A673 (cell line): ENCODE measurements at regions of chr7 and their contacts with region 1.

Region 1: DNA sequence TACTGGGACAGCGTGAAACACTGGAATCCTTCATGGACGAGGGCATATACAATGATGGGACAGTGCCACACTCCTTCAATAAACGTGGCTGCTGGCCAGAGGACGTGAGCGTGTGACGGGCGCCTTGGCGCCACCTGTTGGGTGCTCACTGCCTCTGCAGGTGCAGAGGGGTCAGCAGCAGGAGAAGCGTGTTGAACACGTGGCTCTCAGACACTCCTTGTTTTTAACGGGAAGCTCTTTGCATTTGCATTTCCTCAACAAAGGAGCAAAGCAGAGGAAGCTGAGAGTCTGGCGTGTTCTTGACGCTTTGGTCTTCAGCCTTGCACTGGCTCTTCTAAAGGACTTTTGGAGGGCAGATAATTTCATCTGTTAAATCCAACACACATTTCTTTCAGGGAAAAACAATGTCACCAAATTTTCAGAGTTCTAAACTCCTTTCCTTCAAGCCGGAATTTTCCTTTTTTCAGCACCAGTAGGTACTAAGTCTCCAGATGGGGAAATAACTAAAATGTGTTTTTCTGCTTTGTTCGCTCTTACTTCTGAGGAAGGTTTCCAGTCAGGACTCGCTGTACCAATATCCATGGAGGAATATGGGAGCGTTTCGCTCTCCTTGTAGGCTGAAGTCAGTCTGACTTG is 2.9 kb upstream of the GET4 start:
- DNase-seq: peak; percentile 92
- H3K4me3 ChIP-seq: no peak overlapping the region
- H3K27ac ChIP-seq: peak overlapping the region; percentile 44
- H3K4me1 ChIP-seq: peaks cover 11% of the 10 kb centered on the region
- H3K27me3 ChIP-seq: no peaks in the 10 kb centered on the region
- CTCF ChIP-seq: peak; percentile 98

Region 2: GRCh38 chr7:322111-322671 is 551.3 kb before region 1 on chr7:
- CTCF ChIA-PET with region 1: no interaction called
- POLR2A ChIA-PET with region 1: no interaction called
- intact Hi-C with region 1: loop called (anchors 2 kb)
- DNase-seq: peak; percentile 55
- H3K4me3 ChIP-seq: no peak overlapping the region
- H3K27ac ChIP-seq: no peak overlapping the region
- H3K4me1 ChIP-seq: peaks cover 7% of the 10 kb centered on the region
- H3K27me3 ChIP-seq: peaks cover 9% of the 10 kb centered on the region
- CTCF ChIP-seq: peak; percentile 82

Region 3: GRCh38 chr7:786472-787255 is 86.8 kb before region 1 on chr7:
- CTCF ChIA-PET with region 1: interaction called, 10 read pairs
- POLR2A ChIA-PET with region 1: no interaction called
- intact Hi-C with region 1: loop called (anchors 1 kb)
- DNase-seq: peak; percentile 83
- H3K4me3 ChIP-seq: no peak overlapping the region
- H3K27ac ChIP-seq: no peak overlapping the region
- H3K4me1 ChIP-seq: peaks cover 8% of the 10 kb centered on the region
- H3K27me3 ChIP-seq: no peaks in the 10 kb centered on the region
- CTCF ChIP-seq: peak; percentile 94

Region 4: GRCh38 chr7:821688-822087 is 51.8 kb before region 1 on chr7:
- CTCF ChIA-PET with region 1: interaction called, 3 read pairs
- POLR2A ChIA-PET with region 1: no interaction called
- intact Hi-C with region 1: loop called (anchors 5 kb)
- DNase-seq: no peak
- H3K4me3 ChIP-seq: no peak overlapping the region
- H3K27ac ChIP-seq: peak overlapping the region; percentile 47
- H3K4me1 ChIP-seq: peaks cover 61% of the 10 kb centered on the region
- H3K27me3 ChIP-seq: no peaks in the 10 kb centered on the region
- CTCF ChIP-seq: 0 out of 2 replicates have a peak, but pooled peaks have one; percentile 18